Activated CD4-positive, alpha-beta T cell treated with anti-CD3 and anti-CD28 coated beads for 36 hours (primary cell): ENCODE measurements at regions of chr1 and their contacts with region 1.

Region 1: DNA sequence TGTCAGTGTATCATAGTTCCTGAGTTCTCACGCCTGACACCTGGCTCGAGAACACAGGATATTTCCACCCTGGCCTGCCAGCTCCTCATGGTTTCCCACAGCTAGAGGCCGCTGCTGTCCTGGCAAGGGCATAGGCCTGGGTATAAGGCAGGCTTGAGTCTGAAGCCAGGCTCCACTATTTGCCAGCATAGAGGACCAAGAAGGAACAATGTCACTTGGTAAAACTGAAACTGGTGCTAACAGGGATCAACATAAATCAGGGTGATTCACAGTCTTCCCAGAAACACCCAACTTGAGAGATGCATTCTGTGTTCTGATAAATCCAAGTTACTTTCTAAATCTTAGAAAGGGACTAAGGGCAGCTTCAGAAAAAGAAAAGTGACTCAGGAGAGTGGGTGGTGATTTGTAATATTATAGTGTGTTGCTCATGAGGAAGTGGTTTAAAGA is 6.9 kb upstream of the S100A2 start:
- DNase-seq: peak; percentile 85
- ATAC-seq: peak; percentile 82
- H3K4me3 Mint-ChIP-seq: no peak overlapping the region
- H3K27ac Mint-ChIP-seq: peak overlapping the region; percentile 83
- H3K4me1 Mint-ChIP-seq: peaks cover 48% of the 10 kb centered on the region
- H3K27me3 Mint-ChIP-seq: peaks cover 2% of the 10 kb centered on the region

Region 2: DNA sequence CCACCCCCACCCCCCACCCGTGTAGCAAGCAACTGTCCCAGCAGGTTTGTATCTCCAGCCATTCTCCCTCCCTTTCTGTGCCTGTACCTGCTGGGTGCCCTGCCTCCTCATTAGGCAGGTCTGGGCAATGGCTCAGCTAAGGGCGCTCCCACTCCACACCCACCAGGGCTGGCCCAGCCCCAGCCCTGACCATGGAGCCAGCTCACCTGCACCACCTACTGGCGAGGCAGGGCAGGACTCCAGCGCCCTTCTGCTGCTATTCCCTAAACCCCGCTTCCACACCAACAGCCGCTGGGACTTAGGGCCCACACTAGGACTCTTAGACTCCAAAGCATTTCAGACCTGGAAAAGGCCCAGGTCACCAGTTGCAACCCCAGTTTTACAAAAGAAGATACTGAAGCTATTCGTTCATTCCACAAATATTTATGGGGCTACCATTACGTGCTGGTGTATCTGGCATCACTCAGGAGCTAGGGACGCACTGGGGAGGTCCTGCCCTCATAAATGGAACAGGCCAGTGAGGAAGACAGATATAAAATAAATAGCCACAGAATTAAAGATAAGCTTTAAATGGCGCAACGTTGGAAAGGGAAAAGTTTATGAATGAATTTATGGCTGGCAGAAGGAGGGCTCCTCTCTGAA is 283.8 kb before region 1 on chr1:
- CTCF ChIA-PET with region 1: no interaction called
- POLR2A ChIA-PET with region 1: no interaction called
- intact Hi-C with region 1: no loop called
- DNase-seq: peak; percentile 57
- ATAC-seq: peak; percentile 51
- H3K4me3 Mint-ChIP-seq: no peak overlapping the region
- H3K27ac Mint-ChIP-seq: no peak overlapping the region
- H3K4me1 Mint-ChIP-seq: peaks cover 23% of the 10 kb centered on the region
- H3K27me3 Mint-ChIP-seq: peaks cover 3% of the 10 kb centered on the region

Region 3: DNA sequence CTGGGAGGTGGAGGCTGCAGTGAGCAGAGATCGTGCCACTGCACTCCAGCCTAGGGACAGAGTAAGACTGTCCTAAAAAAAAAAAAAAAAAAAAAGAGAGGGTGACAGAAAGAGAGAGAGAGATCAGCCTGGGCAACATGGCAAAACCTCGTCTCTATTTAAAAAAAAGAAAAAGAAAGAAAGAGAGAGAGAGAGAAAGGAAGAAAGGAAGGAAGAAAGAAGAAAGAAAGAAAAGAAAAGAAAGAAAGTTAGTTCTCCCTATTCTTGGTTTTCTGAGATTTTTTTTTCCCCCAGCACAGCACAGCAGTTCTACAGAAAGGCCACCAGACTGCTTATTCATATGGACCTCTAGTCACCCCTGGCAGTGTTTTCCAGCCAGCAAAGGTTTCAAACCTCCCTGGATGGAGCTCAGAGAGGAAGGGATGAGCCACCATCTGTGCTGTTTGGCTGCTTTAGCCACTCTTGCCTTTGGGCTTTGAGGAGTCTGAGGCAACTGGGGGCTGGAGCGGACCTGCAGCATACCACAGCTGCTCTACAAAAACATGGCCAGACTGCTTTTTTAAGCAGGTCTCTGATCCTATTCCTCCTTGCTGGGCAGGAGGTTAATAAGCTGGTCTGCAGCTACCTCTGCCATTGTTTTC is 47.4 kb before region 1 on chr1:
- CTCF ChIA-PET with region 1: interaction called, 12 read pairs
- POLR2A ChIA-PET with region 1: no interaction called
- intact Hi-C with region 1: no loop called
- DNase-seq: no peak
- ATAC-seq: no peak
- H3K4me3 Mint-ChIP-seq: no peak overlapping the region
- H3K27ac Mint-ChIP-seq: no peak overlapping the region
- H3K4me1 Mint-ChIP-seq: peaks cover 2% of the 10 kb centered on the region
- H3K27me3 Mint-ChIP-seq: no peaks in the 10 kb centered on the region

Region 4: GRCh38 chr1:153545067-153546055 is 27.2 kb before region 1 on chr1 and contains the start of gene S100A4:
- CTCF ChIA-PET with region 1: interaction called, 28 read pairs
- POLR2A ChIA-PET with region 1: interaction called, 7 read pairs
- intact Hi-C with region 1: loop called in 1 of 2 experiments (anchors 1 kb)
- DNase-seq: peak; percentile 97
- ATAC-seq: peak; percentile 83
- H3K4me3 Mint-ChIP-seq: peak within 1 kb of the TSS; percentile 78
- H3K27ac Mint-ChIP-seq: peak within 1 kb of the TSS; percentile 96
- H3K4me1 Mint-ChIP-seq: peaks cover 70% of the 10 kb centered on the region
- H3K27me3 Mint-ChIP-seq: no peaks in the 10 kb centered on the region
- total RNA-seq, gene S100A4: 84.8 to 166 TPM

Region 5: GRCh38 chr1:153617675-153618074 is 45.1 kb after region 1 on chr1:
- CTCF ChIA-PET with region 1: interaction called, 29 read pairs
- POLR2A ChIA-PET with region 1: no interaction called
- intact Hi-C with region 1: loop called (anchors 1 kb)
- DNase-seq: peak; percentile 90
- ATAC-seq: peak; percentile 99
- H3K4me3 Mint-ChIP-seq: no peak overlapping the region
- H3K27ac Mint-ChIP-seq: peak overlapping the region; percentile 58
- H3K4me1 Mint-ChIP-seq: peaks cover 20% of the 10 kb centered on the region
- H3K27me3 Mint-ChIP-seq: no peaks in the 10 kb centered on the region

Region 6: GRCh38 chr1:153658400-153659174 is 86.0 kb after region 1 on chr1 and contains the start of gene SNAPIN:
- CTCF ChIA-PET with region 1: no interaction called
- POLR2A ChIA-PET with region 1: no interaction called
- intact Hi-C with region 1: loop called (anchors 1 to 5 kb)
- DNase-seq: peak; percentile 96
- ATAC-seq: peak; percentile 96
- H3K4me3 Mint-ChIP-seq: peak within 1 kb of the TSS; percentile 95
- H3K27ac Mint-ChIP-seq: peak within 1 kb of the TSS; percentile 90
- H3K4me1 Mint-ChIP-seq: peaks cover 13% of the 10 kb centered on the region
- H3K27me3 Mint-ChIP-seq: no peaks in the 10 kb centered on the region
- total RNA-seq, gene SNAPIN: 34.2 to 38.4 TPM

Region 7: GRCh38 chr1:153677718-153678505 is 105.3 kb after region 1 on chr1:
- CTCF ChIA-PET with region 1: no interaction called
- POLR2A ChIA-PET with region 1: no interaction called
- intact Hi-C with region 1: no loop called
- DNase-seq: peak; percentile 74
- ATAC-seq: peak; percentile 66
- H3K4me3 Mint-ChIP-seq: peak overlapping the region; percentile 64
- H3K27ac Mint-ChIP-seq: no peak overlapping the region
- H3K4me1 Mint-ChIP-seq: peaks cover 21% of the 10 kb centered on the region
- H3K27me3 Mint-ChIP-seq: peaks cover 43% of the 10 kb centered on the region

Region 8: DNA sequence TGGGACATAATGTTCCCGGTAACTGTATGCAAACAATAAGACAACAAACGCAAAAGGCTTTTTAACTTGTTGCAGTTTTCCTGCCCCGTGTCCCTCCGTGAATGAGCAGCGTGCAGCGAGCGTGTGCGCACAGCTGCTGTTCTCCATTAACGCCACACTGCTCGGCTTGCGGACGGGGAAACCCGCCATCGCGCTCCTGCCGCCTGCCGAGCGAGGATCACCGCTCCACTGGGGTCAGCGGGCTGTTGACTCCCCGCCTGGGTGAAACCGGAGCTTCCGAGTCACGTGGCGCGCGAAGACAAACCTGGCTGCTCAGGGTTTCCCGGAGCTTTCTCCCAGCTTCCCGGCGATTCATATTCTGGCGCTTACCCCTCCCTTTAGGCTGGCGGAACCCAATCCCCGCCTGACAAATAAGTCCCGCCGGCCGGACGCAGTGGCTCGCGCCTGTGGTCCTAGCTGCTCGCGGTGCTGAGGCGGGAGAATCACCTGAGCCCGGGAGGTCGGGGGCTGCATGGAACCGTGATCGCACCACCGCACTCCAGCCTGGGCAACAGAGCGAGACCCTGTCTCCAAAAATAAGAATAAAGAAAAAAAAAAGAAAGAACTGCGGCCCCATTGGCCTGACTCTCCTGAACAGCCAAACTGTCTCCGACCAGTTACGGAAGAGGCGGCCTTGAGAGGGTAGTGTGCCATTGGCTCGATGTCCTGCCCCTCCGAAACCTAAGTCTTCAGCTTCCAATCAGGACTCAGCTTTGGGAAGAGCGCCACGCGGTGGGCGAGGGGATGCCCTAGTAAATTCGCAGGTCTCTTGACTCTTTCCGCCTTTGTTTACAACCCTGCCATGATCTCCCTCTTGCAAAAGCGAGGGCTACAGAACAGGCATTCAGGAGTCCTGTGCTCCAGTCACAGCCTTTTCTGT is 394.7 kb after region 1 on chr1 and contains the start of gene CREB3L4:
- CTCF ChIA-PET with region 1: no interaction called
- POLR2A ChIA-PET with region 1: no interaction called
- intact Hi-C with region 1: loop called (anchors 5 to 10 kb)
- DNase-seq: peak; percentile 91
- ATAC-seq: peak; percentile 87
- H3K4me3 Mint-ChIP-seq: peak within 1 kb of the TSS; percentile 96
- H3K27ac Mint-ChIP-seq: peak within 1 kb of the TSS; percentile 96
- H3K4me1 Mint-ChIP-seq: peaks cover 38% of the 10 kb centered on the region
- H3K27me3 Mint-ChIP-seq: no peaks in the 10 kb centered on the region
- total RNA-seq, gene CREB3L4: 8.5 to 9.1 TPM